Activated CD8-positive, alpha-beta T cell treated with anti-CD3 and anti-CD28 coated beads for 36 hours (primary cell): ENCODE measurements at regions of chr17 and their contacts with region 1.

Region 1: DNA sequence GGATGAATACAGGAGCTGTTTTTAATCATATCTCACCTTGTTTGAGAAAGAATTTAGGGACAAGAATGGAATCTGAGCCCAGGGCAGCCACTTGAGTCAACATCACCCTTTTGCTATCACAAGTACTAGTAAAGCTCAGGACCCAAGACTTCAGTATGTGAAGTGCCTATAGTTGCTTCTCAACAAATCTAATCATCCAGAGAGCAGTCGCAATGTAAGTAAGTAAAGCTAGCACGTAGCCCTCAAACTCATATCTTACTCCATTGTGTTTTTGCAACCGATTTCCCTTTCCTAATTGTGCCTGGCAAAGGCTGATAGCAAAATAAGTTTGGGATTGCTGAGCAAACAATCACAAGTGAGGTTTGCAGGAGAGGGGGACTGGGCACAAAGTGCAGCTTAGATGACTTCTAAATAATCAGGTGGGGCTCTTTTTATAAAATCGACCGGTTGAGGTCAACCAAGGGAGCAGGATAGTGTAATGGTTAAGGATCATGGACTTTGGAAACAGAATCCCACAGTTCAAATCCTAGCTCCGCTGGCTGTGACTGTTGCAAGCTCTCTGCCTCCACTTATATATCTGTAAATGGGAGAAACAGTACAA is 13.0 kb downstream of the TOB1 start:
- DNase-seq: no peak
- ATAC-seq: no peak
- H3K4me3 Mint-ChIP-seq: no peak overlapping the region
- H3K27ac Mint-ChIP-seq: no peak overlapping the region
- H3K4me1 Mint-ChIP-seq: peaks cover 13% of the 10 kb centered on the region
- H3K27me3 Mint-ChIP-seq: no peaks in the 10 kb centered on the region
- CTCF ChIP-seq: no peak

Region 2: DNA sequence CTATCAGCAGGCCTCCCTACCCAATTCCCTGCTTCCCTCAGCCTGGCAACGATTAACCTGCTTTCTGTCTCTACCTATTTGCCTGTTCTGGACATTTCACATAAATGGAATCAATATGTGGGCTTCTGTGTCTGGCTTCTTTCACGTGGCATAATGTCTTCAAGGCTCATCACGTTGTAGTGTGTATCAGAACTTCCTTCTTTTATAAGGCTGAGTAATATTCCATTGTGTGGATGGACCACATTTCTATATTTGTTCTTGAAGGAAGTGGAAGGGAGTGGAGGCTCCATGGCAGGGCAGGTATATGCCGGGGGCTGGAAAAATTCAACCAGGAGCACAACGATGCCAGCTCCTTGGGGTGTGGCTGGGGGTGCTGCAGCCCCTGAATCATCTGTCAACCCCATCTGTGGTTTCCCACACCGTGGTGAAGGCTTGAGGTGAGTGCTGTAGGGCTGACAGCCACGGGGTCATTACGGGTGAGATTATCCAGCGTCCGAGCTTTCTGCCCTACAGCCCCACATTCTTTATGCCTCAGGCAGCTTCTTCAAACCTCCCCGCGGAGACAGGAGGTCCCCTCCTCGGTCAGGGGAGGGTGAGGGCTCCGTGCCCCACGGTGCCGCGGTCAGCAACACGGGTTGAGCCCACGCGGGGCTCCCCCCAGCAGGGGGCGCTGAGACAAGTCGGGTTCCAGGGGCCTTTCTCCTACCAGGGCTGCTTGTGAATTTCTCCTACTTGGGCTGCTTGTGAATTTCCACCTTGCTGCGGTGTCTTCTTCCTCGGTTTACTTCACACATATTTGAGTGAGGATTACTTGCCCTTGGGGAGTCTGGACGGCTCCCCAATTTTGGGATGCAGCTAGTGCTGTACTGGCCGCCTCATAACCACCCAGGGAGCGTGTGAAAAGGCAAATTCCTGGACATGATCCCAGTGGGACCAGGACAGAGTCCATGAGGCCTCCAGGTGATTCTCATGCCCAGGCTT is 36.1 kb before region 1 on chr17:
- CTCF ChIA-PET with region 1: interaction called, 12 read pairs
- POLR2A ChIA-PET with region 1: no interaction called
- intact Hi-C with region 1: no loop called
- DNase-seq: peak; percentile 60
- ATAC-seq: peak; percentile 71
- H3K4me3 Mint-ChIP-seq: no peak overlapping the region
- H3K27ac Mint-ChIP-seq: no peak overlapping the region
- H3K4me1 Mint-ChIP-seq: peaks cover 6% of the 10 kb centered on the region
- H3K27me3 Mint-ChIP-seq: peaks cover 12% of the 10 kb centered on the region
- CTCF ChIP-seq: peak; percentile 88

Region 3: DNA sequence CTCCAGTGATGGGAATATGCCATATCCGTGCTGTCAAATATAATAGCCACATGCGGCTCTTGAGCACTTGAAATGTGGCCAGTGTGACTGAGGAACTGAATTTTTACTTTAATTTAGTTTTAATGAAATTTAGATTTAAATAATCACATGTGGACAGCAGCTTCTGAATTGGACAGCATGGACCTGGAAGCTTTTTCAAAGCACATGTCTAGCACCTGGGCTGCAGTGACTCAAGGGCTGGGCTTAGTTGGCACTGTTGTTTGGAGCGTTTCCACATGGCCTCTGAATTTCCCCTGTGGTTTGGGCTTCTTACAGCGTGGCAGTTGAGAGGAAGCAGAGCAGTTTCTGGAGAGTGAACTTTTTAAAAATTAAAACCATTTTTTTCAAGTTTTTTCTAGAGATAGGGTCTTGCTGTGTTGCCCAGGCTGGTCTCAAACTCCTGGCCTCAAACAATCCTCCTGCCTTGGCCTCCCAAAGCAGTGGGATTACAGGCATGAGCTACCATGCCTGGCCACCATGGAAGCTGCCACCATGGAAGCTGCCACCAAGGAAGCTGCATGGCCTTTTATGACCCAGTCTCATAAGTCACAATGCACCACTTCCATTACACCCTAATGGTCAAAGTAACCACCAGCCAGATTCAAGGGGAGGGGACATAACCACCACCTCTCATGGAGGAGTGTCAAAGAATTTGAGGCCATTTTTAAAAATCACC is 19.8 kb after region 1 on chr17:
- CTCF ChIA-PET with region 1: interaction called, 116 read pairs
- POLR2A ChIA-PET with region 1: interaction called, 3 read pairs
- intact Hi-C with region 1: no loop called
- DNase-seq: peak; percentile 83
- ATAC-seq: peak; percentile 62
- H3K4me3 Mint-ChIP-seq: no peak overlapping the region
- H3K27ac Mint-ChIP-seq: peak overlapping the region; percentile 46
- H3K4me1 Mint-ChIP-seq: peaks cover 40% of the 10 kb centered on the region
- H3K27me3 Mint-ChIP-seq: no peaks in the 10 kb centered on the region
- CTCF ChIP-seq: no peak

Region 4: DNA sequence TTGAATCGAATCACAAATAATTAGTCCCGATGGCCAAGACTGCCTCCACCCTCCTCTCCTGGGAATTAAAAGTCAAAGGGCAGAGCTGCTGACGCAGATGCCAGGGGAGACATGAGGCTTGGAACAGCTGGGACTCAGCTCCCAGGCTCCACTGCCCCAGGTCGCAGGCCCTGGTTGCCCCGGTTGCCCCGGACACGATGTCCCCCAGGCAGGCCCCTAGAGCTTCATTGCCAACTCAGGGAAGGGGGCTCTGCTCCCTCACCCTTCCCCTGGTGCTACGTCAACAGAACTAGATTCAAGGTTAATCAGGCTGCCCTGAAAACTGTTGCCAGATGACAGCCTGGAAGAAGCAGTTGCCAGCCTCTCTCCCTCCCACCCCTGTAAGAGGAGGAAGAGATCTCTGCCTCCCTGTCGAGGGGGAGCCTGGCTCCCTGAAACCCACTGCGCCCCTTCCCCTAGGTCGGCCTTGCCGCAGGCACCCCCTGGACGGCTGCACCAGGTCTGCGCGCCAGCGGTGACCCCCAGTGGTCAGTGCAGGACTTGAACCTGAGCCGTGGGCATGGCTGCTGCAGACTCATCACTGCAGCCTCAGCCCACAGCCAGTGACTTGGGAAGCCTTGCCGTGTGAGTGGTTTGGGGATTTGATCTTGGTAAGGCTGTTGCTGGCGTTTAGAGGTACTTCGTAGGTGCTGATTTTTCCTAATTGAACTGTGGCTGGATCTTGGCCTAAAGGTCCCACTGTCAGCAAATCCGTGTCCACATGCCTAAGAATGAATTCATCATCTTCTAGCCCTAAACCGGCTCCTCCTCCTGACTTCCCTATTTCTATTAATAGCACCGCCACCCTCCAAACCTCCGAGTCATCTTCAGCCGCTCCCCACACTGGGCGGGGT is 97.1 kb after region 1 on chr17:
- CTCF ChIA-PET with region 1: interaction called, 132 read pairs
- POLR2A ChIA-PET with region 1: interaction called, 14 read pairs
- intact Hi-C with region 1: no loop called
- DNase-seq: peak; percentile 69
- ATAC-seq: peak; percentile 91
- H3K4me3 Mint-ChIP-seq: no peak overlapping the region
- H3K27ac Mint-ChIP-seq: no peak overlapping the region
- H3K4me1 Mint-ChIP-seq: peaks cover 12% of the 10 kb centered on the region
- H3K27me3 Mint-ChIP-seq: no peaks in the 10 kb centered on the region
- CTCF ChIP-seq: peak; percentile 69

Region 5: DNA sequence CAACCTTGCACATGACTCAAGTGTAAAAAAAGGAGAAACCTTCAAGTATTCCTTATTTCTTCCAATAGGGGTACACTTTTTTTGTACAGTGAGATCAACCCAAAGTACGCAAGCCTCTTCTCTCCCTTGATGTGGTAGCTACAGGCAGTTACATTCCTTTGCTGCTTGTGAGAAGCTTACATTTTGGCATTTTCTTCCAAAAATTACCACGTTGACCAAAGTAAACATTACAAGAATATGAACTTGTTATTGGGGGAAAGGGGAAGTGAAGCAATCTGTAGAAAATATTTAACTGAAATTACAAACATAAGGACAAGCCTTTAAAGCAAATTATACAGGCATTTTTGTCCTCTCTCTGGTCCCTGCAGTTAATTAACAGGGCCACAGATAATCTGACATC is 110.0 kb after region 1 on chr17:
- CTCF ChIA-PET with region 1: interaction called, 132 read pairs
- POLR2A ChIA-PET with region 1: interaction called, 3 read pairs
- intact Hi-C with region 1: no loop called
- DNase-seq: no peak
- ATAC-seq: no peak
- H3K4me3 Mint-ChIP-seq: no peak overlapping the region
- H3K27ac Mint-ChIP-seq: no peak overlapping the region
- H3K4me1 Mint-ChIP-seq: peaks cover 6% of the 10 kb centered on the region
- H3K27me3 Mint-ChIP-seq: no peaks in the 10 kb centered on the region
- CTCF ChIP-seq: no peak